ENCODE measurements at regions of chrX and their contacts with region 1.

Region 1: GRCh38 chrX:153517423-153517822 is at the start of gene ATP2B3:
- DNase-seq: no peak
- H3K4me3 Mint-ChIP-seq: no peak within 1 kb of the TSS
- H3K27ac Mint-ChIP-seq: no peak within 1 kb of the TSS
- H3K4me1 Mint-ChIP-seq: no peaks in the 10 kb centered on the region
- H3K27me3 Mint-ChIP-seq: peaks cover 5% of the 10 kb centered on the region
- total RNA-seq, gene ATP2B3: 0.05 TPM in 1 of 2 replicates, not detected in the other

Region 2: GRCh38 chrX:153460845-153461244 is 56.6 kb before region 1 on chrX:
- intact Hi-C with region 1: loop called (anchors 2 kb)
- DNase-seq: no peak
- H3K4me3 Mint-ChIP-seq: no peak overlapping the region
- H3K27ac Mint-ChIP-seq: no peak overlapping the region
- H3K4me1 Mint-ChIP-seq: no peaks in the 10 kb centered on the region
- H3K27me3 Mint-ChIP-seq: no peaks in the 10 kb centered on the region

Measured in activated T-helper 1 cell treated with anti-CD3 and anti-CD28 coated beads, Interleukin-12 subunit alpha, Interleukin-12 subunit beta, Interleukin-2, Interleukin-4 antibody, amounts not matched to agents 30 ng/mL and 10 ng/mL and 1 ng/mL, durations not matched to agents 14 hours and 24 hours and 36 hours (primary cell).